HCT116 (cell line): ENCODE measurements at regions of chr4 and their contacts with region 1.

Region 1: GRCh38 chr4:151287409-151287808 is 10.4 kb downstream of the PRSS48 start:
- DNase-seq: no peak
- ATAC-seq: no peak
- H3K4me3 ChIP-seq: no peak overlapping the region
- H3K27ac ChIP-seq: no peak overlapping the region
- H3K4me1 ChIP-seq: peaks cover 0 to 11% of the 10 kb centered on the region in 2 experiments; a peak in 1 of 4 replicates
- H3K27me3 ChIP-seq: no peaks in the 10 kb centered on the region
- CTCF ChIP-seq: no peak
- POLR2A ChIP-seq: no peak
- RAD21 ChIP-seq: no peak

Region 2: GRCh38 chr4:150609101-150609500 is 678.3 kb before region 1 on chr4:
- CTCF ChIA-PET with region 1: no interaction called
- POLR2A ChIA-PET with region 1: no interaction called
- RAD21 ChIA-PET with region 1: no interaction called
- intact Hi-C with region 1: no loop called
- DNase-seq: no peak
- ATAC-seq: no peak
- H3K4me3 ChIP-seq: no peak overlapping the region
- H3K27ac ChIP-seq: no peak overlapping the region
- H3K4me1 ChIP-seq: no peaks in the 10 kb centered on the region
- H3K27me3 ChIP-seq: no peaks in the 10 kb centered on the region
- CTCF ChIP-seq: no peak
- POLR2A ChIP-seq: no peak
- RAD21 ChIP-seq: no peak

Region 3: DNA sequence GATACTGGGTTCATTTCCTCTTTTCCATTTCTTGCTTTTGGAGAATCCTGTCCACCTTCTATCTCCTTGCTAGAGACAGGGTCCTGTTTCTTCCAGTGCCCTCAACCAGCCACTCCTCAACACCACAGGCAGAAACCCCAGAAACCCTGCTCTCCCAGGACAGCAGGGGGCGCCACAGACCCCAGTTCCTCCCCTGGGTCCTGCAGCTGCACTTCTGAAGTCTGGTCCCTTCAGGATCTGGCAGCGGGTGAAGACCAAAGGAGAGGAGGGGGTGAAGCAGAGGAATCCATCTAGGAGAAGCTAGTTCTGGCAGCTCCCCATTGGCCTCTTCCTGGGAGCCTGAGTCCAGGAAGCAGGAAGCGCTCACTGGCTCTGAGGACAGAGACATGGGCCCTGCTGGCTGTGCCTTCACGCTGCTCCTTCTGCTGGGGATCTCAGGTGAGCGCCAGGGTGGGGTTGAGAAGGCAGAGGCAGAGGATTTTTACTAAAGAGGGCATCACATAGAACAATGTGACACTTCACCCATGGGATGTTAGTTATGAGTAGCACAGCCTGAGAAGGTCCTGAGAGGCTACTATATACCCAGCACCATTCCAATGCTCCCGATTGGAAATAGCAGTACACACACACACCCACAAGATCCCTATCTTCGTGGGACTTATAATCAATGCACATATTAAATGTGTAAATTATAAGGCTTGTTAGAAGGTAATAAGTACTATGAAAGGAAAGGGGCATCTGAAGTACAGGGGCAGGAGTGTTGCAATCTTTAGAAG is 10.4 kb before region 1 on chr4 and contains the start of gene PRSS48:
- CTCF ChIA-PET with region 1: interaction called, 11 read pairs
- POLR2A ChIA-PET with region 1: no interaction called
- RAD21 ChIA-PET with region 1: interaction called in 1 of 2 experiments, 3 read pairs
- intact Hi-C with region 1: no loop called
- DNase-seq: peak; percentile 34
- ATAC-seq: peak; percentile 97
- H3K4me3 ChIP-seq: no peak within 1 kb of the TSS
- H3K27ac ChIP-seq: no peak within 1 kb of the TSS
- H3K4me1 ChIP-seq: peaks cover 0 to 3% of the 10 kb centered on the region in 2 experiments; a peak in 1 of 4 replicates
- H3K27me3 ChIP-seq: no peaks in the 10 kb centered on the region
- CTCF ChIP-seq: peak; percentile 85 to 99 (median 93)
- POLR2A ChIP-seq: no peak
- RAD21 ChIP-seq: peak; percentile 94
- total RNA-seq, gene PRSS48: not detected

Region 4: DNA sequence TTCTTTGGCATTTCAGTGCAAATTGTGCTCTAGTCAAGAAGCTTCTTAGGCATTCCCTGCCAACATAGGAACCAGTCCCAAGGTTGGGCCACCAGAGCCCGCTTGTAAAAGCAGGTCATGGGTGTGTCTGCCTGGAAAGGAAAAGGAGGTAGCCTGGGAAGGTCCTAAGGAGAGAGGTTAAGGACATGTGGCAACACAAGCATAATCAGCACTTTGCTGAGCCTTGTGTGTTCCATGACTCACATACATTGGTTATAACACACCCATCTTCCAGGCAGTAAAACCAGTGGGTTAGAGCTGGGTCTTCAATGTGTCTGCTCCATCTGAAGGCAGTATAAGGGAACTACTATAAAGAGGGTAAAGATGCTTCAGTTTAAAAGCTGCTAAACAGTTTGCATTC is 286.5 kb after region 1 on chr4:
- CTCF ChIA-PET with region 1: no interaction called
- POLR2A ChIA-PET with region 1: no interaction called
- RAD21 ChIA-PET with region 1: no interaction called
- intact Hi-C with region 1: no loop called
- DNase-seq: no peak
- ATAC-seq: 0 out of 2 replicates have a peak, but pooled peaks have one; percentile 40
- H3K4me3 ChIP-seq: no peak overlapping the region
- H3K27ac ChIP-seq: no peak overlapping the region
- H3K4me1 ChIP-seq: peaks cover 0 to 5% of the 10 kb centered on the region in 2 experiments; a peak in 1 of 4 replicates
- H3K27me3 ChIP-seq: no peaks in the 10 kb centered on the region
- CTCF ChIP-seq: no peak
- POLR2A ChIP-seq: no peak
- RAD21 ChIP-seq: no peak